KBM-7 (cell line): ENCODE measurements at regions of chr2 and their contacts with region 1.

Region 1: DNA sequence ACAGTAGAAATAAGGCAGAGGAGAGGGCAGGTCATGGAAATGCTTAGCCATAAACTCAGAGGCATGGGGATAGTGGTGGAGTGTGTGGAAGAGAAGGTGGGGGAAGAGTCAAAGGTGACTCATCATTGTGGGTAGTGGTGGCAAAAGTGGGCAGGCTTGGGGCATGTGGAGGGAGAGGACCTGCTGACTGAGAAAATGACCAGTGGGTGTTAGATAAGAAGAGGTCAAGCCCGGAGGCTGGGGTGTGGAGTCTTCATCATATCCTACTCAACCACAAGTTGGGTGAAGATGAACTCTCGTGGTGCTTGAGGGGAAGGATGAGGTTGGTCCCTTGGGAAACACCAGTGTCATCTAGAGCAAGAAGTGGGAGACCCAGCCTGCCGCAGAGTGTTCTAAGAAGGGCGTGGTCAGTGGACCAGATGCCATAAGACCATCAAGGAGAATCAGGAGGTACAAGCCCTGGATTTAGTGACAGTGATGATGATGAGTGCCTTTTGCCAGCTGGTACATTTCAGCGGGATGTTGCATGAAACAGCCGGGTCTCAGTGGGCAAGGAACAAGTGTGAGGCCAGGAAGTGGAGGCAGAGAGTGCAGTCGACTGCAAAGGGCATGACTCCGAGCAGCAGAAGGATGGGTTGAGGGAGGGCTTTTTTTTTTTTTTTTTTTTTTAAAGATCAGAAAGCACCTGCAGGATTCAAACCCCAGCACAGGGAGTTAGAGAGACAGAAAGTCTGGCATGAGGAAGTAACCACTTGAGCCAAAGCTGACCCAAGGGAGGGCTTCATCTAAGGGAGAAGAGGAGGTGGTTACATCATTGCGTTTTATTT is 122.6 kb upstream of the SPRED2 start:
- DNase-seq: no peak

Region 2: DNA sequence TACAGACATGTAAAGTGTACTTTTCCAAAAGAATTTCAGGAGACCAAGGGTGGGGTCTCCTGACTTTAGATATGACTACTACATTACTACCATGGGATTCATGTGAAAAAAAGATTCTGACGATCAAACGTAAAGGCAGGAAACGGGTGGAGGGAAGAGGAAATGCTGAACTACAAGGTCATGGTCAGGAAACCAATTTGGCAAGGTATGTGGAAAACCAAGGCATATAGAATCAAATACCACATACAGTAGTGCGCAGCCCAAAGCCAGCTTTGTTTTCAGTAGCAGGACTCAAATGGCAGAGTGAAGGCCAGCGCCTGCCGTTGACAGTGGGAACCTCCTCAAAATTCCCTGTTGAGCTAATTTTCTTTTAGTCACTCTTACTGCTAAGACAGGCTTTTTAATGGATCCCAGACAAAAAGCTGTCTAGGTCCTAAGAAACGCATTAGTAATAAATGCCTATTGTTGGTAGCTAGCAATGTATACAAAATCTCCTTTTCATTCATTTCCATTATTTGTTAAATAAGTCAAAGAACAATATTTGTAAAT is 843.7 kb before region 1 on chr2:
- in situ Hi-C with region 1: no loop called
- DNase-seq: peak; percentile 40

Region 3: GRCh38 chr2:65056215-65057053 is 498.5 kb before region 1 on chr2 and contains the start of gene CEP68:
- in situ Hi-C with region 1: loop called (anchors 25 kb)
- DNase-seq: peak; percentile 97